ENCODE measurements at regions of chr1 and their contacts with region 1.

Region 1: GRCh38 chr1:108590957-108591356 is 31.1 kb downstream of the EEIG2 start:
- DNase-seq: peak; percentile 15
- H3K4me3 Mint-ChIP-seq: no peak overlapping the region
- H3K27ac Mint-ChIP-seq: peak overlapping the region; percentile 14
- H3K4me1 Mint-ChIP-seq: peaks cover 60% of the 10 kb centered on the region
- H3K27me3 Mint-ChIP-seq: no peaks in the 10 kb centered on the region

Region 2: GRCh38 chr1:108504447-108504846 is 86.5 kb before region 1 on chr1:
- intact Hi-C with region 1: loop called (anchors 1 kb)
- DNase-seq: no peak
- H3K4me3 Mint-ChIP-seq: no peak overlapping the region
- H3K27ac Mint-ChIP-seq: no peak overlapping the region
- H3K4me1 Mint-ChIP-seq: peaks cover 2% of the 10 kb centered on the region
- H3K27me3 Mint-ChIP-seq: peaks cover 38% of the 10 kb centered on the region

Region 3: DNA sequence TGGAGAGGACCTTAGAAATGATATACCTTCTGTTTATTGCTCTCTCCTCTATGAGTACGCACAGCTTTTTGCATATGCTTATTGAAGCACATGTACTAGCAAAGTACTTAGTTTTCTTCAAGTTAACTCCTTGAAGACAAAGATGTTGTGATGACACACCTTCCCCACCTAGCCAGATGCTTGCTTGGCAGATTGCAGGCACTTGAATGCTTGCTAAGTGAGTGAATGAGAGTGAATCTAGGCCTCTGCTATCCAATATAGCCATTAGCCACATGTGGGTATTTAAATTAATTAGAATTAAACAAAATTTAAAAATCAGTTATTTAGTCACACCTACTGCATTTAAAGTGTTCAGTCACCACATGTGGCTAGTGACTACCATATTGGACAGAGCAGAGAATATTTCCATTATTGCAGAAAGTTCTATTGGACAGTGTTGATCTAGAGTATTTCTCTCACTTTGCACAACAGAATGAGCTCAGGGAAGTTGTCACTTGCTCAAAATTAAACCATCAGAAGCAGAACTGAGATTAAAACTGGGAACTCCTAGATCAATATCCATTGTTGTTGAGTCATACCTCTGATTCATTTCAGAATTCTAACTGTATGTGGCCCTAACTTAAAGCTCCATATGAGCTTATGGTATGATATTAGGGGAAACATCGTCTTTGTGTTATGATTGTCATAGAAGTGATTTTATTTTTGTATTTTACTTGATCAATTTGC is 39.7 kb before region 1 on chr1:
- intact Hi-C with region 1: loop called (anchors 5 kb)
- DNase-seq: no peak
- H3K4me3 Mint-ChIP-seq: no peak overlapping the region
- H3K27ac Mint-ChIP-seq: no peak overlapping the region
- H3K4me1 Mint-ChIP-seq: peaks cover 24% of the 10 kb centered on the region
- H3K27me3 Mint-ChIP-seq: peaks cover 11% of the 10 kb centered on the region

Region 4: DNA sequence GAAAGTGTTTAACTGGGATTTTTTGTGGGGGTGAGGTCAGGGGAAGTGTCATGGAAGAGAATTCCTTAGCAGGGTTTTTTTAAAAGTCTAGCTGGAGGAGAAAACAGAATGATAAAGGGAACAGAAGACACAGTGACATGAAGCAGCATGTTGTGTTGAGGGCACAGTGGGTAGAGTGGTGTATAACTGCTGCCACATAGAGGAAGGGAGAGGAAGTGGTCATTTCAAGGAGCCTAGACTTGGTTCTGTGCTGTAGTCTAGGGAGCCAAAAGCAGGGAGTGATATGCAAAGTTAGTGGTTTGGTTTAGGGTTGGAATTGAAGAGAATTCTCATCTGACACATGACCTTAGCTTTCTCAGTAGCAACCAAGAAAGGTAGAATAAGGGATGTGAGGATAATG is 20.8 kb before region 1 on chr1:
- intact Hi-C with region 1: loop called (anchors 2 kb)
- DNase-seq: no peak
- H3K4me3 Mint-ChIP-seq: no peak overlapping the region
- H3K27ac Mint-ChIP-seq: no peak overlapping the region
- H3K4me1 Mint-ChIP-seq: peaks cover 12% of the 10 kb centered on the region
- H3K27me3 Mint-ChIP-seq: no peaks in the 10 kb centered on the region

Region 5: GRCh38 chr1:108617008-108617723 is 26.2 kb after region 1 on chr1:
- intact Hi-C with region 1: loop called (anchors 2 kb)
- DNase-seq: no peak
- H3K4me3 Mint-ChIP-seq: no peak overlapping the region
- H3K27ac Mint-ChIP-seq: no peak overlapping the region
- H3K4me1 Mint-ChIP-seq: no peaks in the 10 kb centered on the region
- H3K27me3 Mint-ChIP-seq: no peaks in the 10 kb centered on the region